ENCODE measurements at regions of chr3 and their contacts with region 1.

Region 1: DNA sequence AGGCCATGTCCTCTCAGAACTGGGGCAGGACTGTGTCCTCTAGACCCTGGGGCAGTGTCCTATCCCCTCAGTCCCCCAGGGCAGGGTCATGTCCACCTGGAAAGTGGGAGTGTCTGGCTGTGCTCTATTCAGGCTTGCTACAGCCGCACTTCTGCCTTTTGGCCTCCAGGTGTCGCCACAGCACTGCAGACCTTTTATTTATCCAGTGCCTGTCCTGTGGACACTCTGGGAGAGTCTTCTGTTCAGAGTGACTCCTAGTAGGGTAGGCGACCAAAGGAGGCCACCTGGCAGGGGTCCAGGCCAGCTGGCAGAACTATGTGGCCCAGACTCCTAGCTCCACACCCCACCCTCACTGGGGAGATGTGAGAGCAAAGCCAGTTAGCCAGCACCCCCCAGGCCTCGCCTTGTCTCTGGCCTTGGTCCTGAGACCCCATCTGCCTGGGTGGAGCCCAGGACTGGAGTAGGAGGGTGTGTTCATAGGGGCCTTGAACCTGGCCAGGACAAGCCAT is 3.9 kb downstream of the TMIE start:
- DNase-seq: peak; percentile 60 to 69 (median 64)
- H3K4me3 ChIP-seq: no peak overlapping the region
- H3K4me3 Mint-ChIP-seq: no peak overlapping the region
- H3K27ac ChIP-seq: no peak overlapping the region
- H3K27ac Mint-ChIP-seq: no peak overlapping the region
- H3K4me1 ChIP-seq: peaks cover 12 to 16% of the 10 kb centered on the region in 2 donors
- H3K4me1 Mint-ChIP-seq: peaks cover 15% of the 10 kb centered on the region
- H3K27me3 ChIP-seq: peaks cover 8 to 27% of the 10 kb centered on the region in 2 donors
- H3K27me3 Mint-ChIP-seq: peaks cover 32 to 44% (median 40%) of the 10 kb centered on the region in 3 donors
- CTCF ChIP-seq: peak; percentile 97

Region 2: GRCh38 chr3:46748170-46748569 is 43.1 kb after region 1 on chr3:
- intact Hi-C with region 1: no loop called
- DNase-seq: no peak
- H3K4me3 ChIP-seq: no peak overlapping the region
- H3K4me3 Mint-ChIP-seq: no peak overlapping the region
- H3K27ac ChIP-seq: no peak overlapping the region
- H3K27ac Mint-ChIP-seq: no peak overlapping the region
- H3K4me1 ChIP-seq: no peaks in the 10 kb centered on the region
- H3K4me1 Mint-ChIP-seq: peaks cover 2% of the 10 kb centered on the region
- H3K27me3 ChIP-seq: no peaks in the 10 kb centered on the region
- H3K27me3 Mint-ChIP-seq: peaks cover 0 to 10% (median 6%) of the 10 kb centered on the region in 3 donors
- CTCF ChIP-seq: no peak

Region 3: GRCh38 chr3:46895204-46895660 is 190.2 kb after region 1 on chr3:
- intact Hi-C with region 1: loop called (anchors 1 to 2 kb)
- DNase-seq: peak; percentile 47 to 60 (median 54)
- H3K4me3 ChIP-seq: no peak overlapping the region
- H3K4me3 Mint-ChIP-seq: no peak overlapping the region
- H3K27ac ChIP-seq: no peak overlapping the region
- H3K27ac Mint-ChIP-seq: peak overlapping the region in 1 of 7 donors; percentile 19
- H3K4me1 ChIP-seq: peaks cover 13 to 14% of the 10 kb centered on the region in 2 donors
- H3K4me1 Mint-ChIP-seq: peaks cover 29% of the 10 kb centered on the region
- H3K27me3 ChIP-seq: peaks cover 3 to 44% of the 10 kb centered on the region in 2 donors
- H3K27me3 Mint-ChIP-seq: peaks cover 37 to 86% (median 54%) of the 10 kb centered on the region in 3 donors
- CTCF ChIP-seq: peak; percentile 85

Region 4: GRCh38 chr3:46909535-46910442 is 204.7 kb after region 1 on chr3:
- intact Hi-C with region 1: loop called (anchors 1 to 5 kb)
- DNase-seq: peak; percentile 75 to 87 (median 80)
- H3K4me3 ChIP-seq: no peak overlapping the region
- H3K4me3 Mint-ChIP-seq: peak overlapping the region in 1 of 2 donors; percentile 36
- H3K27ac ChIP-seq: no peak overlapping the region
- H3K27ac Mint-ChIP-seq: no peak overlapping the region
- H3K4me1 ChIP-seq: peaks cover 5 to 12% of the 10 kb centered on the region in 2 donors
- H3K4me1 Mint-ChIP-seq: peaks cover 8% of the 10 kb centered on the region
- H3K27me3 ChIP-seq: peaks cover 0 to 3% of the 10 kb centered on the region in 2 donors
- H3K27me3 Mint-ChIP-seq: peaks cover 0 to 4% (median 2%) of the 10 kb centered on the region in 3 donors
- CTCF ChIP-seq: peak; percentile 87

Region 5: GRCh38 chr3:46998121-46998851 is 293.2 kb after region 1 on chr3:
- intact Hi-C with region 1: loop called in 1 of 2 experiments (anchors 5 kb)
- DNase-seq: peak; percentile 46 to 64 (median 52)
- H3K4me3 ChIP-seq: no peak overlapping the region
- H3K4me3 Mint-ChIP-seq: no peak overlapping the region
- H3K27ac ChIP-seq: peak overlapping the region in 1 of 2 donors; percentile 59
- H3K27ac Mint-ChIP-seq: peak overlapping the region in 6 of 7 donors; percentile 62 to 87 (median 70)
- H3K4me1 ChIP-seq: peaks cover 0 to 12% of the 10 kb centered on the region in 2 donors
- H3K4me1 Mint-ChIP-seq: peaks cover 15% of the 10 kb centered on the region
- H3K27me3 ChIP-seq: no peaks in the 10 kb centered on the region
- H3K27me3 Mint-ChIP-seq: no peaks in the 10 kb centered on the region
- CTCF ChIP-seq: peak; percentile 91

Region 6: DNA sequence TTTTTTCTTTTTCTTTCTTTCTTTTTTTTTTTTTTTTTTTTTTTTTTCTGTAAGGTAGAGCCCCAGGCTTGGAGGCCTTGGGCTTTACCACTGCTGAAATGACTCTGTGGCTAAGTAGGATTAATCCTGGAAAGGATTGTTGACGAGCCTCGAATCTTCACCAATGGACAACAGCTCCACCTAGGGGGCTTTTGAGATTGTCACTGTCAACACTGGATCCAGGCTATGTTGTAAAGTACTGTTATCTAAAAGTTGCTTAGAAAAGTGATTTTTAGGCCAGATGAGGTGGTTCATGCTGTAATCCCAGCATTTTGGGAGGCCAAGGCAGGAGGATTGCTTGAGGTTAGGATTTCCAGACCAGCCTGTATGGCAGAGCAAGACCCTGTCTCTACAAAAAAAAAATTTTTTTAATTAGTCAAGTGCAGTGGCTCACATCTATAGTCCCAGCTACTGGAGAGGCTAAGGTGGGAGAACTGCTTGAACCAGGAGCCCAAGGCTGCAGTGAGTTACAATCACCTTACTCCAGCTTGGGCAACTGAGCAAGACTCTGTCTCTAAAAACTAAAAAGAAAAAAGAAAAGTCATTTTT is 619.3 kb after region 1 on chr3:
- intact Hi-C with region 1: loop called in 1 of 2 experiments (anchors 10 kb)
- DNase-seq: peak; percentile 31 to 64 (median 55)
- H3K4me3 ChIP-seq: no peak overlapping the region
- H3K4me3 Mint-ChIP-seq: no peak overlapping the region
- H3K27ac ChIP-seq: no peak overlapping the region
- H3K27ac Mint-ChIP-seq: no peak overlapping the region
- H3K4me1 ChIP-seq: no peaks in the 10 kb centered on the region
- H3K4me1 Mint-ChIP-seq: peaks cover 3% of the 10 kb centered on the region
- H3K27me3 ChIP-seq: no peaks in the 10 kb centered on the region
- H3K27me3 Mint-ChIP-seq: peaks cover 0 to 3% (median 1%) of the 10 kb centered on the region in 3 donors
- CTCF ChIP-seq: peak; percentile 87

Measured in CD14-positive monocyte (primary cell).